K562 (cell line): ENCODE measurements at regions of chr13 and their contacts with region 1.

Region 1: DNA sequence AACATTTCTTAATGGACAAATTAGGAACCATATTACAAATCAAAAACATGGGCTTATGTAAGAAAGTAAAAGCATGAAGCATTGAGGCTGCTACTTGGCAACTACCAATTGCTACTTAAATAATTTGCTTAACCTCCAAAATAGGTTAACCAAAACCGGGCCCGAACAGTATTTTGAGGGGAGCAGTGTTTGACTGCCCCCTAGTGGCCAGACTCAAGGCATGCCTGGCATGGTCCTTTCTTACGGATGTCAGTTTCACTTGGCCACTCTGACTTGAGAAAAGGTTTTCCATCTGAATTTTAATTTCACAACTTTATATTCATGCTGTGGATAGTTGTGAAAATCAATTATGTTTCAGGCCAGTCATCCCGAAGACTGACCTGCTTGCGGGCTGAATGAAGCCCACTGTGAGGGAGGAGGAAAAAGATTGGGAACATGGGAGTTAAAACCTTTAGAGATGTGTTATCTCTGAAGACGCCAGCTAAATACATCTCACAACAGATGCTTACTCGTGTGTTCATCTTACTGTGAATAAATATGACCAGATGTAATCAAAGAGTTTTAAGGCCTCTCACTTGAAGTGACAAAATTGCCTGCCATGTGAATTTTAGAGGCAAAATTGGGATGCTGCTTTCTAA is 2.9 kb downstream of the RXFP2 start:
- DNase-seq: peak; percentile 53 to 68 (median 54)
- ATAC-seq: peak; percentile 90
- H3K4me3 ChIP-seq: no peak overlapping the region
- H3K27ac ChIP-seq: no peak overlapping the region
- H3K4me1 ChIP-seq: no peaks in the 10 kb centered on the region
- H3K27me3 ChIP-seq: no peaks in the 10 kb centered on the region; a peak in 1 of 5 replicates
- CTCF ChIP-seq: peak; percentile 71 to 81 (median 79)
- EP300 ChIP-seq: no peak
- POLR2A ChIP-seq: no peak
- RAD21 ChIP-seq: peak; percentile 43 to 66; a peak in 3 of 4 replicates

Region 2: GRCh38 chr13:31236211-31236786 is 505.9 kb before region 1 on chr13:
- CTCF ChIA-PET with region 1: interaction called, 3 read pairs
- POLR2A ChIA-PET with region 1: no interaction called
- in situ Hi-C with region 1: loop called (anchors 25 kb)
- intact Hi-C with region 1: no loop called
- DNase-seq: peak in 3 of 4 experiments; percentile 13 to 25 (median 14)
- ATAC-seq: peak; percentile 81
- H3K4me3 ChIP-seq: no peak overlapping the region
- H3K27ac ChIP-seq: no peak overlapping the region
- H3K4me1 ChIP-seq: no peaks in the 10 kb centered on the region
- H3K27me3 ChIP-seq: no peaks in the 10 kb centered on the region
- CTCF ChIP-seq: peak; percentile 36 to 63 (median 49); a peak in 5 of 6 replicates
- EP300 ChIP-seq: no peak
- POLR2A ChIP-seq: no peak
- RAD21 ChIP-seq: peak; percentile 50 to 65

Region 3: GRCh38 chr13:31394491-31394890 is 347.7 kb before region 1 on chr13:
- CTCF ChIA-PET with region 1: no interaction called
- POLR2A ChIA-PET with region 1: no interaction called
- in situ Hi-C with region 1: no loop called
- intact Hi-C with region 1: no loop called
- DNase-seq: no peak
- ATAC-seq: no peak
- H3K4me3 ChIP-seq: no peak overlapping the region
- H3K27ac ChIP-seq: no peak overlapping the region
- H3K4me1 ChIP-seq: no peaks in the 10 kb centered on the region
- H3K27me3 ChIP-seq: no peaks in the 10 kb centered on the region
- CTCF ChIP-seq: no peak
- EP300 ChIP-seq: no peak
- POLR2A ChIP-seq: no peak
- RAD21 ChIP-seq: no peak

Region 4: GRCh38 chr13:31431722-31432137 is 310.5 kb before region 1 on chr13:
- CTCF ChIA-PET with region 1: interaction called, 8 read pairs
- POLR2A ChIA-PET with region 1: no interaction called
- in situ Hi-C with region 1: loop called (anchors 5 kb)
- intact Hi-C with region 1: loop called (anchors 1 kb)
- DNase-seq: peak; percentile 44 to 60 (median 54)
- ATAC-seq: peak; percentile 80
- H3K4me3 ChIP-seq: no peak overlapping the region
- H3K27ac ChIP-seq: no peak overlapping the region
- H3K4me1 ChIP-seq: no peaks in the 10 kb centered on the region
- H3K27me3 ChIP-seq: no peaks in the 10 kb centered on the region
- CTCF ChIP-seq: peak; percentile 52 to 56 (median 55)
- EP300 ChIP-seq: no peak
- POLR2A ChIP-seq: no peak
- RAD21 ChIP-seq: peak in 1 of 2 experiments; percentile 38; a peak in 2 of 4 replicates

Region 5: GRCh38 chr13:31538067-31539042 is 203.9 kb before region 1 on chr13:
- CTCF ChIA-PET with region 1: no interaction called
- POLR2A ChIA-PET with region 1: no interaction called
- in situ Hi-C with region 1: no loop called
- intact Hi-C with region 1: loop called (anchors 5 kb)
- DNase-seq: peak; percentile 10 to 14 (median 10)
- ATAC-seq: peak; percentile 55; the same call in 1 of the 3 replicates
- H3K4me3 ChIP-seq: no peak overlapping the region
- H3K27ac ChIP-seq: no peak overlapping the region
- H3K4me1 ChIP-seq: no peaks in the 10 kb centered on the region
- H3K27me3 ChIP-seq: no peaks in the 10 kb centered on the region
- CTCF ChIP-seq: peak in 2 of 3 experiments; percentile 24 to 43; a peak in 3 of 6 replicates
- EP300 ChIP-seq: no peak
- POLR2A ChIP-seq: no peak
- RAD21 ChIP-seq: no peak

Region 6: DNA sequence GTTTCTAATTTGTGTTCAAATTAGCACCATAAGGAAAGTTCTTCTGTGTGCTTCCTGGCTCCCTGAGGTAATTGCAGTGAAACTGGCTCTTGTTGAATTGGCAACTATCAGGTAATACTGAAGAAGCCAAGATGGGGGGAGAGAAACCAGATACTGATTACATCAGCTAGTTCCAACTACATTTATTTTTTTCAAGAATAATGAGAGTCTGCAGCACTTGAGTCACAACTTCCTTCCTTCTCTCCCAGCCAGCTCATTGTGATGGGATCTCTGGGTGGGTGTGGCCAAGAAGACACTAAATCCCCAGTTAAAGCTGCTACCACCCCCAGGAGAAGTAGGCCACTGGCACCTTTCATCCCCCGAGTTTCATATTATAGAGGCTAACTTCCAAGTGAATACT is 103.6 kb before region 1 on chr13:
- CTCF ChIA-PET with region 1: no interaction called
- POLR2A ChIA-PET with region 1: no interaction called
- in situ Hi-C with region 1: no loop called
- intact Hi-C with region 1: no loop called
- DNase-seq: no peak
- ATAC-seq: no peak
- H3K4me3 ChIP-seq: no peak overlapping the region
- H3K27ac ChIP-seq: no peak overlapping the region
- H3K4me1 ChIP-seq: no peaks in the 10 kb centered on the region
- H3K27me3 ChIP-seq: no peaks in the 10 kb centered on the region
- CTCF ChIP-seq: no peak
- EP300 ChIP-seq: no peak
- POLR2A ChIP-seq: no peak
- RAD21 ChIP-seq: no peak

Region 7: DNA sequence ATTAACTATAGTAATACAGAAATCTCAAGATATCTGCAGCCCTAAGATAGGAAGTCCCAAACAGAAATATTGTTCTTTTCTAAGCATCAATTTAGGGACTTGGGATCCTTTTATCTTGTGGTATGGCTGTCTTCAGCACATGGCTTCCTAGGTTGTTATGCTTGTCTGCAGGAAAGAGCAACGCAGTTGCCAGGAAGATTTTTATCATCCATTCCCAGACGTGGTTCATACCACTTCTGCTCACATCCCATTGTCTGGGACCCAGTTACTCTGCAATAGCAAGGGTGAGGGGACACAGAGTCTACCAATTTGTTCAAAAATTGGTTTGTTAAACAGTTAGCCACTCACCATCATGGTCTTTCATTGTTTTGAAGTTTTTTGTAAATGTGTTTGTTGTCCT is 88.5 kb before region 1 on chr13:
- CTCF ChIA-PET with region 1: no interaction called
- POLR2A ChIA-PET with region 1: no interaction called
- in situ Hi-C with region 1: no loop called
- intact Hi-C with region 1: loop called (anchors 2 kb)
- DNase-seq: no peak
- ATAC-seq: no peak
- H3K4me3 ChIP-seq: no peak overlapping the region
- H3K27ac ChIP-seq: no peak overlapping the region
- H3K4me1 ChIP-seq: no peaks in the 10 kb centered on the region
- H3K27me3 ChIP-seq: no peaks in the 10 kb centered on the region
- CTCF ChIP-seq: no peak
- EP300 ChIP-seq: no peak
- POLR2A ChIP-seq: no peak
- RAD21 ChIP-seq: no peak

Region 8: DNA sequence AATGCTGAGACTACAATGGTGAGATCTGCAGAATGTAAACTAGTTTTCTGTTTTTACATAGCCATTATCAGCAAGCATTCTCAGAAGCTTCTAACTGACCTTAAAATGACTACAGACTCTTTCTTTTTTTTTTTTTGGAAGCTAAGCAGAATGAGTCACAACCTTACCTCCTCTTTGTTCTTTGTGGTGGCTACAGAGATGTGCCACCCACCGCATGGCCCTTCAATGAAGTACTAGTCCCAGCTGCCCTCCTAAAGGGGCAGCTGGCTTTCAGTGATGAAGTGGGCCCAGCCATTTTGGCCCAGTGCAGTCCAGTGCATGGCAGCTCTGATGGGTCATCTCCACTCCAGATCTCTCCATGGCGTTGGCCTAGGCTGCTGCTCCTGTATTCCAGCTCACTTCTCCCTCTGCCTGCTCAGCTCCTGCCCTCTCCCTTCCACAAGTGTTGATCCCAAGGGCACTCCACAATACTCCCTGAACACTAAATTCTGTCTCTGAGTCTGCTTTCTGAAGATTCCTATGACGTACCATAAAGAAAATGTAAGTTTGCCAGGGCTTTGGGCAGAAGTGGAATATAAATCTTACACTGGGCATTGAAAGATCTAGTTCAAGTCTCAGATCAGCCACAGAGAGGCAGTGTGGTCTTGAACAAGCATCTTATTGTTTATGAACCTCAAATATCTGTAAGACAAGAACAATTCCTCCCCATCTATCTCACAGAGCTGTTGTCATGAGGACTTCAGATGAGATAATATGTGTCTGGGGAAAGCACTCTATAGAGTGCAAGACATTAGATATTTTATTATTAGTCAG is 82.7 kb after region 1 on chr13:
- CTCF ChIA-PET with region 1: no interaction called
- POLR2A ChIA-PET with region 1: no interaction called
- in situ Hi-C with region 1: no loop called
- intact Hi-C with region 1: no loop called
- DNase-seq: no peak
- ATAC-seq: no peak
- H3K4me3 ChIP-seq: no peak overlapping the region
- H3K27ac ChIP-seq: no peak overlapping the region
- H3K4me1 ChIP-seq: no peaks in the 10 kb centered on the region
- H3K27me3 ChIP-seq: no peaks in the 10 kb centered on the region
- CTCF ChIP-seq: no peak
- EP300 ChIP-seq: no peak
- POLR2A ChIP-seq: no peak
- RAD21 ChIP-seq: no peak